Mammary epithelial cell (primary cell): ENCODE measurements at regions of chr1 and their contacts with region 1.

Region 1: GRCh38 chr1:109548321-109549267 is at the start of gene GNAI3:
- DNase-seq: peak; percentile 96
- H3K4me3 ChIP-seq: peak within 1 kb of the TSS; percentile 83 to 96 (median 89)
- H3K27ac ChIP-seq: peak within 1 kb of the TSS; percentile 98
- H3K4me1 ChIP-seq: peaks cover 9% of the 10 kb centered on the region
- H3K27me3 ChIP-seq: no peaks in the 10 kb centered on the region
- CTCF ChIP-seq: no peak
- total RNA-seq, gene GNAI3: 12.0 to 15.5 TPM

Region 2: DNA sequence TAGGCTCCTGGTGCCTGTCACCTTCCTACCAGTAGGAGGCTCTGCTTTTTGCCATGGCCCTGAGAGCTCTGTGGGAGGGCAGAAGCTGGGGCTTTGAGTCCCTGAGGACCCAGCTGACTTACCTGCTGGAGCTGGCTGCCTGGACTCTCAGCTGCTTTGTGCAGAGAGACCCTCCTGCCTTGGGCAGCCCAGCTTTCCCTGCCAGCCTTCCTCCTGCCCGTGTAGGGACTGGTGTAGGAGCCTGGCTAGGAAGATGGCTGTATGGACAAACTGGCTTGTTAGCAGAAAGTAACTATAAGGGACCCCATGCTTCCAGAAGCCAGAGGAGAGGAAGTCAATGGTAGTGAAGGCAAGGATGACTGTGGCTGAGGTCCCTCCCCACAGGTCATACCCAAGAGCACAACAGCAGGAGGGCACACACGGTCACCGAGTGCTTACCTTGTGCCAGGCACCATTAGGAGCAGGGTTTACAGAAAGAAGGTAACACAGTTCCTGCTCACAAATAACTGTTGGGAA is 309.0 kb before region 1 on chr1:
- CTCF ChIA-PET with region 1: no interaction called
- dilution Hi-C with region 1: no loop called
- in situ Hi-C with region 1: no loop called
- intact Hi-C with region 1: no loop called
- DNase-seq: peak; percentile 61
- H3K4me3 ChIP-seq: no peak overlapping the region
- H3K27ac ChIP-seq: peak overlapping the region; percentile 95
- H3K4me1 ChIP-seq: peaks cover 33% of the 10 kb centered on the region
- H3K27me3 ChIP-seq: no peaks in the 10 kb centered on the region
- CTCF ChIP-seq: peak; percentile 55 to 81

Region 3: GRCh38 chr1:109592916-109593315 is 44.3 kb after region 1 on chr1:
- CTCF ChIA-PET with region 1: no interaction called
- dilution Hi-C with region 1: no loop called
- in situ Hi-C with region 1: no loop called
- intact Hi-C with region 1: loop called (anchors 5 kb)
- DNase-seq: no peak
- H3K4me3 ChIP-seq: no peak overlapping the region
- H3K27ac ChIP-seq: no peak overlapping the region
- H3K4me1 ChIP-seq: peaks cover 12% of the 10 kb centered on the region
- H3K27me3 ChIP-seq: no peaks in the 10 kb centered on the region
- CTCF ChIP-seq: no peak

Region 4: DNA sequence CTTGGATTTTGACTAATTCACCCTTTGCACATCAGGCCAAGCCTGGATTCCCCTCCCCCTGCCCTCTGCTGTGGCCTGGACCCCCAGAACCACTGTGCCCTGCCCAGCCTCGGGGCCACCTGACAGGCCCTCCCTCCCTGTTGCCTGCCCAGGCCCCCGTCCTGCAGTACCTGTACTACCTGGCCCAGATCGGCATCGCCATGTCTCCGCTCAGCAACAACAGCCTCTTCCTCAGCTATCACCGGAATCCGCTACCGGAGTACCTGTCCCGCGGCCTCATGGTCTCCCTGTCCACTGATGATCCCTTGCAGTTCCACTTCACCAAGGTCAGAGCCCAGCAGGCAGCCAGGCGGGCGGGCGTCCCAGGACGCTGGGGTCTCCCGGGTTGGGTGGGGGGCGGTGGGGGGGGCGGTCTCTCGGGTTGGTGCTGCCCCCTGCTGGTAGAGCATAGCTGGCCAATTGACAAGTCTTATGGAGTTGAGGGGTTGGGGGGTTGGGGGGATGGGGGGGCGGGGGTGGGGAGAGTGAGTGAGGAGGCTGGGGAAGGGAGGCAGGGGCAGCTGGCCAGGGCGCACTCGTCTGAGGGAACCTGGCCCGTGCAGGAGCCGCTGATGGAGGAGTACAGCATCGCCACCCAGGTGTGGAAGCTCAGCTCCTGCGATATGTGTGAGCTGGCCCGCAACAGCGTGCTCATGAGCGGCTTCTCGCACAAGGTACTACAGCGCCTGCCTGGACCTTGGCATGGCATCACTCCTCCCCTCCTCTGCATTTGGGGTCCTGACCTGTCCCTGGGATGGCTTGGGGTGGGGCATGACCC is 81.7 kb after region 1 on chr1:
- CTCF ChIA-PET with region 1: interaction called, 17 read pairs
- dilution Hi-C with region 1: no loop called
- in situ Hi-C with region 1: loop called (anchors 5 to 10 kb)
- intact Hi-C with region 1: loop called (anchors 1 kb)
- DNase-seq: no peak
- H3K4me3 ChIP-seq: no peak overlapping the region
- H3K27ac ChIP-seq: no peak overlapping the region
- H3K4me1 ChIP-seq: peaks cover 3% of the 10 kb centered on the region
- H3K27me3 ChIP-seq: no peaks in the 10 kb centered on the region
- CTCF ChIP-seq: peak in 1 of 2 donors; percentile 13

Region 5: DNA sequence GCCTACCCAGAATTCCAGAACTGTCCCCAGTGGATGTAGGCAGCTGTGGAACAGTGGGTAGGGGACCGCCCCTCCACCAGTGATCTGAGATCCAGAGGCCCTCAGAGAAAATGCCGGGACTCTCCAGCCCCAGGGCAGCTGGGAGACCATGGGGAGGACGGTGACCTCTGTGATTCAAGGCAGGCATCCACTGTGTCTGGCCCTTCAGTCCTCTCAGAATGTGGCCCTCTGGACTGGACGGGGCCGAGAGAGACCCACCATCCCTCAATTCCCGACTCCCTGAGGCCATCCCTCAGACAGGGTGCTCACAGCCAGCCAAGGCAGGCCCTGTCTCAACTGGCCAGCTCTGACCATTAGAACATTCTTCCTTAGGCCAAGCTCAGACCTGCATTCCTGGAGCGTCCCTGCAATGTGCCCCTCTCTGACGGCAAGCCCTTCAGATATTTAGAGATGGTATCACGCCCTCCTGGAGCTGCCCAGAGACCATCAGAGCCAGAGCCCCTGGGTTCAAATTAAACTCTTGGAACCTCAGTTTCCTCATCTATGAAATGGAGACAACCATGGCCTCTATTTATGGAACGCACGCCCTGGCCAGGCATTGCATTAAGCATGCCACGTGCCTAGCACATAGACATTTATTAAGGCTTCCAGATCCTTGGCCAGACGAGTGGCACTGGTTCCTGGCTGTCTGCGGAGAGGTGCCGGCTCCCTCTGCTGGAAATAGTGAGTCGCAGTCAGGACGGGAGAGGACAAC is 224.7 kb after region 1 on chr1:
- CTCF ChIA-PET with region 1: interaction called, 6 read pairs
- dilution Hi-C with region 1: no loop called
- in situ Hi-C with region 1: loop called (anchors 5 kb)
- intact Hi-C with region 1: loop called (anchors 1 kb)
- DNase-seq: peak; percentile 71
- H3K4me3 ChIP-seq: no peak overlapping the region
- H3K27ac ChIP-seq: no peak overlapping the region
- H3K4me1 ChIP-seq: no peaks in the 10 kb centered on the region
- H3K27me3 ChIP-seq: no peaks in the 10 kb centered on the region
- CTCF ChIP-seq: peak; percentile 93 to 97

Region 6: DNA sequence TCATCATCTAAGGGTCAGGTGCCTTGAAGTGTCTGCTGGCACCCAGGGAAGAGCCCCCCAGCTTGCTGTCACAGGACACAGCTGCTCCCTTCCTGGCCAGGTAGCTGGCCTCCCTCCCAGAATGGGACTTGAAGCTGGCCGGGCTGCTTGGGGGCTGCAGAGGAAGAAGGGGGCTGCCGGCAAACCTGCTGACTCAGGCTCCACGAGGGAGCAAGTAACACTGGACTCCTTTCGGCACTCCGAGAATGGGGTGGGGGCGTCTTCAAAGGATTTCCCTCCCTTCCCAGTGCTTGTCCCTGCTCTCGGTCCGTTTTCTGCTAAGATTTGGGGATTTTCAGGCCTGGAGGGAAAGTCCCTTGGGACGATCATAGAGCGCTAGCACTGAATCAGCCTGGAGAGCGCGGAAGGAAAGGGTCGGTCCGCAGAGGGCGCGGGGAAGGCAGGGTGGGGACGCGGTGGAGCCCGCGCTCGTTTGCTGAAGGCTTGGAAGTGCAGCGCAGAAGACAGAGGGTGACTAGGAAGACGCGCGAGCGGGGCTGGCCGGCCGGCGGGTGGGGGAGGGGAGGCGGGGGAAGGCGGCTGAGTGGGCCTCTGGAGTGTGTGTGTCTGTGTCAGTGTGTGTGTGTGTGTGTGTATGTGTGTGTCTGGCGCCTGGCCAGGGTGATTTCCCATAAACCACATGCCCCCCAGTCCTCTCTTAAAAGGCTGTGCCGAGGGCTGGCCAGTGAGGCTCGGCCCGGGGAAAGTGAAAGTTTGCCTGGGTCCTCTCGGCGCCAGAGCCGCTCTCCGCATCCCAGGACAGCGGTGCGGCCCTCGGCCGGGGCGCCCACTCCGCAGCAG is 361.7 kb after region 1 on chr1 and contains the start of gene CSF1:
- CTCF ChIA-PET with region 1: no interaction called
- dilution Hi-C with region 1: no loop called
- in situ Hi-C with region 1: no loop called
- intact Hi-C with region 1: loop called (anchors 10 kb)
- DNase-seq: peak; percentile 64
- H3K4me3 ChIP-seq: peak within 1 kb of the TSS; percentile 58 to 81 (median 67)
- H3K27ac ChIP-seq: peak within 1 kb of the TSS; percentile 29
- H3K4me1 ChIP-seq: peaks cover 21% of the 10 kb centered on the region
- H3K27me3 ChIP-seq: no peaks in the 10 kb centered on the region
- CTCF ChIP-seq: no peak
- total RNA-seq, gene CSF1: 5.6 to 29.5 TPM